ENCODE measurements at regions of chr1 and their contacts with region 1.

Region 1: GRCh38 chr1:12019858-12020509 is 686 bp downstream of the MIIP start:
- DNase-seq: no peak
- ATAC-seq: peak; percentile 17
- H3K4me3 ChIP-seq: peak overlapping the region; percentile 88
- H3K27ac ChIP-seq: peak overlapping the region; percentile 86
- H3K4me1 ChIP-seq: peaks cover 4% of the 10 kb centered on the region; the same call in 1 of the 2 replicates
- H3K27me3 ChIP-seq: no peaks in the 10 kb centered on the region
- CTCF ChIP-seq: no peak
- EP300 ChIP-seq: no peak
- POLR2A ChIP-seq: no peak
- RAD21 ChIP-seq: no peak

Region 2: GRCh38 chr1:11979851-11980675 is 39.9 kb before region 1 on chr1 and contains the start of gene MFN2:
- CTCF ChIA-PET with region 1: interaction called, 5 read pairs
- POLR2A ChIA-PET with region 1: interaction called, 12 read pairs
- RAD21 ChIA-PET with region 1: interaction called, 5 read pairs
- SMC1A ChIA-PET with region 1: interaction called, 4 read pairs
- in situ Hi-C with region 1: no loop called
- intact Hi-C with region 1: no loop called
- DNase-seq: peak; percentile 83
- ATAC-seq: peak; percentile 96
- H3K4me3 ChIP-seq: peak within 1 kb of the TSS; percentile 99
- H3K27ac ChIP-seq: peak within 1 kb of the TSS; percentile 83
- H3K4me1 ChIP-seq: peaks cover 6% of the 10 kb centered on the region
- H3K27me3 ChIP-seq: no peaks in the 10 kb centered on the region
- CTCF ChIP-seq: no peak
- EP300 ChIP-seq: no peak
- POLR2A ChIP-seq: peak; percentile 92
- RAD21 ChIP-seq: no peak
- polyA plus RNA-seq, gene MFN2: 5.3 to 6.4 TPM

Region 3: DNA sequence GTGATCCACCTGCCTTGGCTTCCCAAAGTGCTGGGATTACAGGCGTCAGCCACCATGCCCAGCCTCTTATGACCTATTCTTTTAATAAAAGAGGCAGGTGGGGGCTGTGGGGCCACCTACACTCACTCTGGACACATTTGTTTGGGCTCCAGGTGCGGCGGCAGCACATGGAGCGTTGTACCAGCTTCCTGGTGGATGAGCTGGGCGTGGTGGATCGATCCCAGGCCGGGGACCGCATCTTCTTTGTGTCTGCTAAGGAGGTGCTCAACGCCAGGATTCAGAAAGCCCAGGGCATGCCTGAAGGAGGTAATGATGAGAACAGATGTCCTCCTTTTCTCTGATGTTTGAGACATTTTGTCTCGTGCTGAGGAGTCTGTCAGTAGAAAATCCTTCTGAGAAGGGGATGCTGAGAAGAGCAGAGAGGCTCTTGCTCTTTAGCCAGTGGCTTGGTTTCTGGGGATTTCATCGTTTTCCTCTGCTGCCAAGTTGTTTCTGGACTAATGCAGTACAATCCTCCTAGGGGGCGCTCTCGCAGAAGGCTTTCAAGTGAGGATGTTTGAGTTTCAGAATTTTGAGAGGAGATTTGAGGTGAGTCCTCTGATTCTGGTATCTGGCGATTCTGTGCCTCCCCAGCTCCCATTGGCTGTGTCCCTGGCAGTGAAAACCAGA is 18.6 kb before region 1 on chr1:
- CTCF ChIA-PET with region 1: interaction called, 16 read pairs
- POLR2A ChIA-PET with region 1: interaction called, 4 read pairs
- RAD21 ChIA-PET with region 1: interaction called, 3 read pairs
- SMC1A ChIA-PET with region 1: interaction called, 7 read pairs
- in situ Hi-C with region 1: no loop called
- intact Hi-C with region 1: no loop called
- DNase-seq: no peak
- ATAC-seq: peak; percentile 27
- H3K4me3 ChIP-seq: no peak overlapping the region
- H3K27ac ChIP-seq: no peak overlapping the region
- H3K4me1 ChIP-seq: peaks cover 22% of the 10 kb centered on the region
- H3K27me3 ChIP-seq: no peaks in the 10 kb centered on the region
- CTCF ChIP-seq: peak; percentile 64 to 73 (median 67)
- EP300 ChIP-seq: no peak
- POLR2A ChIP-seq: no peak
- RAD21 ChIP-seq: peak; percentile 70

Region 4: DNA sequence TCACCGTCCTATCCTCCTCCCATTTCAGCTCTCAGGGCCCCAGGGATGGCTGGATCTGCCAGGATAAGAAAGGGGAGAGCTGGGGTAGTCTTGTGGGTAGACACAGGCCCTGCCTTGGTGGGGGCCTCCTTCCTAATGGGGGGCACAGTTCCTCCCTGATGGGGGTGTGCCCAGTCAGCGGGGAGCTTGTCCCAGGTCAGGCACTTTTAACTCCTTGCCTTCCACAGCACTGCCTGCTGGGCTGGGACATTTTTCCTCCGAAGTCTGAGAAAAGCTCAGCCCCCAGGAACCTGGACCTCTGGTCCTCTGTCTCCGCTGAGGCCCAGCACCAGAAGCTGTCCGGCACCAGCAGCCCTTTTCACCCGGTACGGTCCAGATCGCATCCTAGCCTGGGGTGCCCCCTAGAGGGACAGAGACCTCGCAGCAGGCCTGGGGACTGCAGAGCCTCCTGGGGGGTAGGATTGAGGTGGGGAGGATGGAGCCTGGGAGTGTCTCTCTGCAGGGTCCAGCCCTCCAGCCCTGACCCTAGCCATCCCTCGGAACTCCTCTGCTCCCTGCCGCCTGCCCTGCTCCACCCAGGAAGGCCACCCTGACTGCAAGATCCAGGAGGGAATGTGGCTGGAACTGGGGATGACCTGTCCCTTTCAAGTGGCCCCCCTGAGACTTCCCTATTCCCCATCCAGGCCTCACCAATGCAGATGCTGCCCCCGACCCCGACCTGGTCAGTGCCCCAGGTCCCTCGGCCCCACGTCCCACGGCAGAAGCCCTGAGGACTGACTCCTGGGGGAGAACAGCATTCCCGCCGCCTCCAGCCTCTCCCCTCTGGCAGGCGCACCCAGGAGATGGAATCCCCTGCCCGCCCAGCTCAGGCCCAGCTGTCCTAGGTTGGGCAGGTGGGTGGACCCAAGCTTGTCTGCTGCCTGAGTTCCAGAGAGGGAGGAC is 11.3 kb after region 1 on chr1:
- CTCF ChIA-PET with region 1: interaction called, 37 read pairs
- POLR2A ChIA-PET with region 1: interaction called, 49 read pairs
- RAD21 ChIA-PET with region 1: interaction called, 13 read pairs
- SMC1A ChIA-PET with region 1: interaction called, 7 read pairs
- in situ Hi-C with region 1: no loop called
- intact Hi-C with region 1: no loop called
- DNase-seq: no peak
- ATAC-seq: peak; percentile 95
- H3K4me3 ChIP-seq: no peak overlapping the region
- H3K27ac ChIP-seq: no peak overlapping the region
- H3K4me1 ChIP-seq: no peaks in the 10 kb centered on the region
- H3K27me3 ChIP-seq: no peaks in the 10 kb centered on the region
- CTCF ChIP-seq: peak; percentile 68 to 80 (median 70)
- EP300 ChIP-seq: no peak
- POLR2A ChIP-seq: no peak
- RAD21 ChIP-seq: peak; percentile 82

Region 5: GRCh38 chr1:12067900-12068821 is 48.2 kb after region 1 on chr1:
- CTCF ChIA-PET with region 1: interaction called, 3 read pairs
- POLR2A ChIA-PET with region 1: interaction called, 17 read pairs
- RAD21 ChIA-PET with region 1: interaction called, 19 read pairs
- SMC1A ChIA-PET with region 1: interaction called, 14 read pairs
- in situ Hi-C with region 1: no loop called
- intact Hi-C with region 1: loop called (anchors 1 kb)
- DNase-seq: peak; percentile 91
- ATAC-seq: peak; percentile 56
- H3K4me3 ChIP-seq: peak overlapping the region; percentile 86
- H3K27ac ChIP-seq: peak overlapping the region; percentile 91
- H3K4me1 ChIP-seq: peaks cover 39% of the 10 kb centered on the region
- H3K27me3 ChIP-seq: no peaks in the 10 kb centered on the region
- CTCF ChIP-seq: no peak
- EP300 ChIP-seq: peak; percentile 45 to 83; a peak in 3 of 4 replicates
- POLR2A ChIP-seq: peak; percentile 67
- RAD21 ChIP-seq: no peak